GM10248 (cell line): ENCODE measurements at regions of chr4 and their contacts with region 1.

Region 1: GRCh38 chr4:77044461-77045150 is 31.2 kb downstream of the CCNI start:
- DNase-seq: peak; percentile 24
- CTCF ChIP-seq: peak; percentile 64

Region 2: DNA sequence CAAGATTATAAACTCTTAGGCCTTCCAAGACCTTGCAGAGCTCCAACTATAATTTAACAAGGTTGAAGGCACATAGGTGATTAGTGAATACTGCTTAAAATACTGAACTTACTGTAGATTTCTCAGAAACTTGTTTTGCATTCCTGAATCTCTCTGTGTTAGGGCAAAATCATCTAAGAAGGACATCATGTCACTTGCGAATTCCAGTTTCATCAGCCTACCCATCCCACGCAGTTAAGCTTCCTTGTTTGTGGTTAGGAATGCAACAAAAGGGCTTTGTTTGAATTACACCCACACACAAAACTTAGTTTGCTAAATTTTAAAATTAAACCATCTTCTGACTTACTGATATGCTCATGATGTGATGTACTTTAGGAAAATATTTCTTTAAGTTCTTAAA is 320.7 kb before region 1 on chr4:
- CTCF ChIA-PET with region 1: no interaction called
- POLR2A ChIA-PET with region 1: no interaction called
- DNase-seq: no peak
- CTCF ChIP-seq: no peak

Region 3: GRCh38 chr4:77031544-77031943 is 13.1 kb before region 1 on chr4:
- CTCF ChIA-PET with region 1: interaction called, 25 read pairs
- POLR2A ChIA-PET with region 1: no interaction called
- DNase-seq: no peak
- CTCF ChIP-seq: no peak

Region 4: GRCh38 chr4:77075869-77076799 is 31.5 kb after region 1 on chr4 and contains the start of gene CCNI:
- CTCF ChIA-PET with region 1: interaction called, 12 read pairs
- POLR2A ChIA-PET with region 1: no interaction called
- DNase-seq: peak; percentile 91
- CTCF ChIP-seq: no peak